Endothelial cell of umbilical vein (primary cell): ENCODE measurements at regions of chr19 and their contacts with region 1.

Region 1: DNA sequence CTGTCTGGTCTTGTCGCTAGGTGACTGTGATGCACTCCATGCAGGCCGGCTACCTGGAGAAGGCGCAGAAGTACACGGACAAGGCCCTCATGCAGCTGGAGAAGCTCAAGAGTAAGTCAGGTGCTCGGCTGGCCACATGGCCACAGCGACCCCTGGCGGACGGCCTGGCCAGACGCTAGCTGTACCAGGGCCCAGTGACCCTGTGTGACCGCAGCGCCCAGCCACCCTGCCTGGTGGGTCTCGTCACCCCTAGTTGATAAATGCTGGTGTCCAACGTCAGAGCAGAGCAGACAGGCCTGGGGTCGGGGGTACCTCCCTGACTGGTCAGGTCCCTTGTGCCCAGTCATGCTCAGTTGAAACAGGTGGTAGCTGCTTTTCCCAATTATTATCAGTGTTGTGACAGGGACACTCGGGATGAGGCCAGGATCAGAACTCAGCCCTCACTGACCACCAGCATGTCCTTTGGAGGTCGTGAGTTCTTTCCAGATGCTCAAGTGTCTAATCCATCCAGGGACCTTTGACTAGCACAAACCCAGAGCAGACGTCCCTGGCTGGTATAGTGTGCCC is 22.2 kb downstream of the MAU2 start:
- DNase-seq: peak; percentile 43
- H3K4me3 ChIP-seq: no peak overlapping the region
- H3K27ac ChIP-seq: no peak overlapping the region
- H3K4me1 ChIP-seq: no peaks in the 10 kb centered on the region
- H3K27me3 ChIP-seq: no peaks in the 10 kb centered on the region
- CTCF ChIP-seq: peak; percentile 87 to 98
- POLR2A ChIP-seq: no peak

Region 2: GRCh38 chr19:19145684-19146608 is 196.9 kb before region 1 on chr19:
- CTCF ChIA-PET with region 1: interaction called, 23 read pairs
- POLR2A ChIA-PET with region 1: no interaction called
- dilution Hi-C with region 1: no loop called
- intact Hi-C with region 1: no loop called
- DNase-seq: peak; percentile 59
- H3K4me3 ChIP-seq: no peak overlapping the region
- H3K27ac ChIP-seq: no peak overlapping the region
- H3K4me1 ChIP-seq: no peaks in the 10 kb centered on the region
- H3K27me3 ChIP-seq: no peaks in the 10 kb centered on the region
- CTCF ChIP-seq: peak; percentile 80 to 97
- POLR2A ChIP-seq: no peak

Region 3: GRCh38 chr19:19192078-19192882 is 150.6 kb before region 1 on chr19 and contains the starts of genes BORCS8 and RFXANK:
- CTCF ChIA-PET with region 1: interaction called, 12 read pairs
- POLR2A ChIA-PET with region 1: no interaction called
- dilution Hi-C with region 1: no loop called
- intact Hi-C with region 1: no loop called
- DNase-seq: peak; percentile 100
- H3K4me3 ChIP-seq: peak within 1 kb of the TSS; percentile 78 to 100 (median 98)
- H3K27ac ChIP-seq: peak within 1 kb of the TSS; percentile 98
- H3K4me1 ChIP-seq: peaks cover 15% of the 10 kb centered on the region
- H3K27me3 ChIP-seq: no peaks in the 10 kb centered on the region
- CTCF ChIP-seq: no peak
- POLR2A ChIP-seq: peak; percentile 52
- total RNA-seq, gene BORCS8: 35.6 and 45.8 TPM in 2 replicates
- total RNA-seq, gene RFXANK: 105 and 118 TPM in 2 replicates

Region 4: GRCh38 chr19:19329126-19329525 is 13.7 kb before region 1 on chr19:
- CTCF ChIA-PET with region 1: interaction called, 29 read pairs
- POLR2A ChIA-PET with region 1: no interaction called
- dilution Hi-C with region 1: no loop called
- intact Hi-C with region 1: no loop called
- DNase-seq: peak; percentile 44
- H3K4me3 ChIP-seq: no peak overlapping the region
- H3K27ac ChIP-seq: peak overlapping the region; percentile 21
- H3K4me1 ChIP-seq: peaks cover 11% of the 10 kb centered on the region
- H3K27me3 ChIP-seq: no peaks in the 10 kb centered on the region
- CTCF ChIP-seq: no peak
- POLR2A ChIP-seq: no peak

Region 5: DNA sequence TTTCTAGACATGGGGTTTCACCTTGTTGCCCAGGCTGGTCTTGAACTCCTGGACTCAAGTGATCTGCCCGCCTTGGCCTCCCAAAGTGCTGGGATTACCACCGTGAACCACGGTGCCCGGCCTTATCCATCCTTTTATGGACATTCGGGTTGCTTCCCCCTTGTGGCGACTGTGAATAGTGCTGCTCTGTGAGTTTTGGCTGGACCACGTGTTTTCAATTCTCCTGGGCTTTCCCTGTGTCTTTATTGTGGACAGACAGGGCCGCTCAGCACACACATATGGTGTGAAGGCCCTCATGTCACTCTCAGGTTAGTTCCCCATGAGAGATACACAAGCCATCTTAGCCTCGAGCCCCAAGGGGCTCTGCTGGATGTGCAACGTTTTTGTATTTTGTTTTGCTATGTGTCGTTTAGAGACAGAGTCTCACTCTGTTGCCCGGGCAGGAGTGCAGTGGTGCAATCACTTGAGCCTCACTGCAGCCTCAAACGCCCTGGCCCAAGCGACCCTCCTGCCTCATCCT is 18.3 kb after region 1 on chr19:
- CTCF ChIA-PET with region 1: interaction called, 51 read pairs
- POLR2A ChIA-PET with region 1: no interaction called
- dilution Hi-C with region 1: no loop called
- intact Hi-C with region 1: no loop called
- DNase-seq: peak; percentile 85
- H3K4me3 ChIP-seq: no peak overlapping the region
- H3K27ac ChIP-seq: no peak overlapping the region
- H3K4me1 ChIP-seq: peaks cover 8% of the 10 kb centered on the region
- H3K27me3 ChIP-seq: no peaks in the 10 kb centered on the region
- CTCF ChIP-seq: peak; percentile 76 to 77
- POLR2A ChIP-seq: no peak

Region 6: DNA sequence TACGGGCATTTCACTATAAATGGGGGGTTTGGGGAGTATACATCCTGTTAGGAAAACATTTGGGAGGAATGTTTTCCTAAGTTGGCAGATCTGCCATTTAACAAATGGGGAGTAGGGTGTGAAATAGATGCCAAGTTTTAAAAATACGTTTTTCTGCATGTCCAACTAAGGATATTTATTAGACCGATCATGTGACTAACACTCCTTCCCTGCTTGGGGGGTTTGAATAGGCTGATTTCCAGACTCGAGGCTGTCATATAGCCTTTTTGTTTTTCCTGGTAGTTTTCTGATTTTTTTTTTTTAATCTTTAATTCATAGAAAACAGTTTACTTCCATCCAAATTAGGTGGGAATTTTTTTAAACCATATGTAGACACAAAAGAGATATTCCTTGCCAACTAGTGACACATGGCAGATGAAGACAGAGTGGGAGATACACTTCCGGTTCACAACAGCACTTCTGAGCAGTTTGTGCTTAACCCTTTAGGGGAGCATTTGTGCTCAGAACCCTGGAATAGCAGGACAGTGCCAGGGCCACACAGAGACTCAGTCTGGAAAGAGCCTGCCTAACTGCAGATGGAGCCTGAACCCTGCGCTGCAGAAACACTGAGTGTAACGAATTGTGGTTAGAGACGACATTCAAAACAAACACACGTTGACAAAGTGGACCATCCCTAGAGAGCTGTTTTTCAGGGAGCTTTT is 57.0 kb after region 1 on chr19:
- CTCF ChIA-PET with region 1: no interaction called
- POLR2A ChIA-PET with region 1: no interaction called
- dilution Hi-C with region 1: no loop called
- intact Hi-C with region 1: no loop called
- DNase-seq: peak; percentile 38
- H3K4me3 ChIP-seq: no peak overlapping the region
- H3K27ac ChIP-seq: no peak overlapping the region
- H3K4me1 ChIP-seq: peaks cover 12% of the 10 kb centered on the region
- H3K27me3 ChIP-seq: no peaks in the 10 kb centered on the region
- CTCF ChIP-seq: no peak
- POLR2A ChIP-seq: no peak